A549 (cell line): ENCODE measurements at regions of chr12 and their contacts with region 1.

Region 1: DNA sequence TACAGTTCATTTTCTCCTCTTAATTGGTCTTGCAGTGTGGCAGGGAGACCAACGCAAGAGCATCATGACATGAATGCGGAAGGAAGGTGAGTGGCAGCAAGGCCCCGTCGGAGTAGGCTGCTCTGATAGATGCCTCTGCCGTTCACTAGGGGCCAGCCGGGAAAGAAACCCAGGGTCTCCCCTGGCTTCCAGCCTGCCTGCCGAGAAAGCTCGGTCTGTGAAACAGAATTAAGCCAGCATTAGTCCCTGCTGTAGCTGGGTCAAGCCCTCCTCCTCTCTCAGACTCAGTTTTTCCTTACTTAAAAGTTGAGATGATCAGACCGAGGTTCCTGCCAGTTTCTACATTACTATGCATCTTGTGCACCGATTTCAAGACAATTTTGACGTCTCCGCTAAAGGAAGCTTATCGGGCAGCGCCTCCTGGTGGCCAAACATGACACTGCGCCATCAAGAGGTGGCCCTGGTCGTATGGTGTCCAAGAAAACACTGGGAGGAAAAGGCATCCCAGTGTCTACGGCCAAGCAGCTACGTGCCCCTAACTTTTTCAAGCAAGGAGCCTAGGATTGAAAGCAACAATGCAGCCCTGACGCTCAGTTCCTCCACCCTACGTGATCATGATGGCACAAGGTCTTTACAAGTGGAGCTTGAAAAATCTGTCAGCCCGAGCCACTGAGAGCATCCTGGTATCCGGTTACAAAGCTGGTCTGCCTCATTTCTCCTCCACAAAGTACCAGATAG is 131.6 kb downstream of the KSR2 start:
- DNase-seq: peak; percentile 77 to 84
- ATAC-seq: peak; percentile 77 to 92
- H3K4me3 ChIP-seq: no peak overlapping the region
- H3K27ac ChIP-seq: peak overlapping the region; percentile 37 to 60; a peak in 5 of 6 replicates
- H3K4me1 ChIP-seq: peaks cover 13% of the 10 kb centered on the region
- CTCF ChIP-seq: peak; percentile 94
- EP300 ChIP-seq: no peak
- POLR2A ChIP-seq: no peak
- RAD21 ChIP-seq: peak; percentile 99 to 100

Region 2: DNA sequence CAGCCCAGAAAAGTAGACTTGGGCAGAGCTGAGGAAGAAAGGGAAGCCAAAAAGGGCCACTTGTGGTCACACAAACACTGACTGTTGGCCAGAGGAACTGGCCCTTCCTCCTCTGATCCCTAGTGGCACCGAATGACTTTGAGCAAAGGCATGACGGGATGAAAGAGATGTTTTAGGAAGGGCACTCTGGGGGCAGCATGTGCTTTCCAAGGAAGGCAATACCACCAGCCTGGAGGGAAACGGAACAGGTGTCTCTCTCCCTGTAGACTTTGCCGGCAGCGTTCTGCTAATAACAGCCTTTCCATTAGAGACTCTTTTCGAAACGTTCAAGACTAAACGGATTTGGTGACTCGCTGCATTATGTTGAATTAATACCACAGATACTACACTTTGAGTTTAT is 634.6 kb before region 1 on chr12:
- CTCF ChIA-PET with region 1: interaction called, 287 read pairs
- POLR2A ChIA-PET with region 1: no interaction called
- DNase-seq: no peak
- ATAC-seq: no peak
- H3K4me3 ChIP-seq: no peak overlapping the region
- H3K27ac ChIP-seq: no peak overlapping the region
- H3K4me1 ChIP-seq: no peaks in the 10 kb centered on the region
- CTCF ChIP-seq: no peak
- EP300 ChIP-seq: no peak
- POLR2A ChIP-seq: no peak
- RAD21 ChIP-seq: no peak

Region 3: DNA sequence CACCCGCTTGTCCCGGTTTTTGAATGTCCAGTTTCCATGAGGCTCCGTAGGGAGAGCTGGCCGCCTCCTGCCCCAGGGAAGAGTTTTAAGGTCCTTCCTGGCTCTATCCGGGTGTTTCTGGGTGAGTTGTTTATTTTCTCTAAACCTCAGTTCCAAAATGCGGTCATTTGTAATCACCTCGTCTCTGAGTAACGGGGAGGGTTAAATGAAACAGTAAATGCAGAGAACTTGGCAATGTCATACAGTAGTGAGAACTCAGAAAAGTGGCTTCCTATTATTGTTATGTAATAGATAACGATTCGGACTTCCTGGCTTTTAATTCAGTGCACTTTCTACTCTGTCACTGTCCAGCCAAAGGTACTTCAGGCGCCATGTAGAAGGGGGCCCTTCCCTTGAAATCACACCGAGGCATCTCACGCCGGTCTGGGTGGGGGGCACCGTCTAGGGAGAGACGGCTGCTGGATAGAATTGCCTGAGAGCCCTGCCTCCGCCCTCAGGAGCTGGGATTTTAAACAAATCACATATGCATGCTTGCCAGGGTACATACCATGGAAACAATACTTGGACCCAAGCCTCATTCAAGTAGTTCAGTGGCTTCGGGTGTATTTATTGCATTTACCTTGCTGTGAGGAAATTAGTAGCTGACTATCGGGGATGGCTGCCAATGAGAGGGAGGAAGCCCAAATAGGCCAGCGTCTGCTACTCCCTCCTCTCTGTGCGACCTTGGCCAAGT is 502.1 kb before region 1 on chr12:
- CTCF ChIA-PET with region 1: interaction called, 28 read pairs
- POLR2A ChIA-PET with region 1: no interaction called
- DNase-seq: no peak
- ATAC-seq: no peak
- H3K4me3 ChIP-seq: no peak overlapping the region
- H3K27ac ChIP-seq: no peak overlapping the region
- H3K4me1 ChIP-seq: peaks cover 12% of the 10 kb centered on the region; the same call in 2 of the 3 replicates
- CTCF ChIP-seq: no peak
- EP300 ChIP-seq: no peak
- POLR2A ChIP-seq: no peak
- RAD21 ChIP-seq: no peak

Region 4: DNA sequence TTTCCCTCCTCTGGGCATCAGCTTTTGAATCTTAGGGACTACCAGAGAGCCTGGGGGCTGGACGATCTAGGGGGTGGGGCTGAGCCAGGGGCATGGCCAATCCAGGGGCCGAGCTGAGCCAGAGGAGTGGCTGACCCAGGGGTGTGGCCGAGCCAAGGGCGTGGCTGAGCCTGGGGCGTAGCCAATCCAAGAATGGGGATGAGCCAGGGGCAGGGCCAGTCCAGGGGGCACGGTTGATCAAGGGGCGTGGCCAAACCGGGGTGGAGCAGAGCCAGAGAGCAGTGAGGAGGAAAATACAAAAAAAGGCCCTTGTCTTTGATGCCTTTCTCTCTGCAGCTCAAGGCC is 256.5 kb before region 1 on chr12:
- CTCF ChIA-PET with region 1: interaction called, 13 read pairs
- POLR2A ChIA-PET with region 1: no interaction called
- DNase-seq: peak; percentile 36 to 66
- ATAC-seq: peak; percentile 73 to 96; a peak in 5 of 6 replicates
- H3K4me3 ChIP-seq: no peak overlapping the region
- H3K27ac ChIP-seq: no peak overlapping the region
- H3K4me1 ChIP-seq: 0 out of 3 replicates have a peak, but pooled peaks cover 11% of the 10 kb centered on the region
- CTCF ChIP-seq: no peak
- EP300 ChIP-seq: no peak
- POLR2A ChIP-seq: no peak
- RAD21 ChIP-seq: no peak

Region 5: DNA sequence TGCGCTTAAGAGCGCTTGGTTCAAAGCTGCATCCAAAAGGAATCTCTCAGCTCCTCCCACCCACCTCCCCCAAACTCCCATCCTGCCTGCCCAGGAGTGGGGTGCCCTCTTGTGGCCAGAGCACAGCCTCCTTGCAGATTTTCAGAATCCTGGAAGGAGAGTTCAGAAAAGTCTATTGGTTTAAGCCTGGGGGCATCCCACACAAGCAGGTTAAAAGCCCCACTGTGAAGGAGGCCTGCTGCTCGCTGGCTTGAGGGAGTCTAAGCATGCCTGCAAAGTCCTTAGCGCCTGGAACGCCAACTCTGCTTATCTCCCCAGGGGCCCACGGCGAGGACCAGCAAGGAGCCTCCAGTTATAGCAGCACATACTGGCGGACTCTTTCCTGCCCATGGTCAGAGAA is 165.4 kb before region 1 on chr12:
- CTCF ChIA-PET with region 1: interaction called, 14 read pairs
- POLR2A ChIA-PET with region 1: no interaction called
- DNase-seq: peak; percentile 71 to 73
- ATAC-seq: peak; percentile 46 to 86; a peak in 4 of 6 replicates
- H3K4me3 ChIP-seq: no peak overlapping the region
- H3K27ac ChIP-seq: peak overlapping the region in 1 of 2 experiments; percentile 57; a peak in 2 of 6 replicates
- H3K4me1 ChIP-seq: 0 out of 3 replicates have a peak, but pooled peaks cover 3% of the 10 kb centered on the region
- CTCF ChIP-seq: peak; percentile 64
- EP300 ChIP-seq: no peak
- POLR2A ChIP-seq: no peak
- RAD21 ChIP-seq: peak; percentile 80 to 93

Region 6: DNA sequence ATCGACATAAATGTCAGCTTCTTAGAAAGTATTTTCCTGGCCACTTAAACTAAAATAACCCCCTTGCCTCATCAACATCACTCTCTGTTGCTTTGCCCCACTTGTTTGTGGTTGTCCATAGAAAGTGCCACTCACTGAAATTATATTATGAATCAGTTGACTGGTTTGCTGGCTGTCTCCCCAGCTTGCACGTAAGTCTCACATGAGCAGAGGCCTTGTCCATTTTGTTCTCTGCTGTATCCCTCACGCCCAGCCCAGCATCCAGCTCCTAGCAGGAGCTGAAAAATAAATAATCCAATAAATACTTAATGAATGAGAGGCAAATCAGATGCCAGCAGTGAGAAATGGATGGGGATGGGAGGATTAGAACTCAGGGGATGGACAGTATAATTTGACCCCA is 27.7 kb before region 1 on chr12:
- CTCF ChIA-PET with region 1: interaction called, 12 read pairs
- POLR2A ChIA-PET with region 1: no interaction called
- DNase-seq: no peak
- ATAC-seq: no peak
- H3K4me3 ChIP-seq: no peak overlapping the region
- H3K27ac ChIP-seq: no peak overlapping the region
- H3K4me1 ChIP-seq: no peaks in the 10 kb centered on the region
- CTCF ChIP-seq: no peak
- EP300 ChIP-seq: no peak
- POLR2A ChIP-seq: no peak
- RAD21 ChIP-seq: no peak